Gastrocnemius medialis (tissue), 4 donors: ENCODE measurements at regions of chr13 and their contacts with region 1.

Region 1: GRCh38 chr13:20566898-20567874 is at the start of gene IFT88:
- DNase-seq: peak; percentile 72 to 81
- ATAC-seq: peak; percentile 89 to 92
- H3K4me3 ChIP-seq: peak within 1 kb of the TSS; percentile 82 to 91 (median 88)
- H3K27ac ChIP-seq: peak within 1 kb of the TSS; percentile 91 to 96 (median 96)
- H3K4me1 ChIP-seq: peaks cover 9% of the 10 kb centered on the region in 2 donors
- H3K27me3 ChIP-seq: no peaks in the 10 kb centered on the region
- CTCF ChIP-seq: peak in 2 of 5 experiments; percentile 26 to 33
- POLR2A ChIP-seq: peak; percentile 51 to 59
- total RNA-seq, gene IFT88: 3.5 to 9.4 (median 4.5) TPM

Region 2: DNA sequence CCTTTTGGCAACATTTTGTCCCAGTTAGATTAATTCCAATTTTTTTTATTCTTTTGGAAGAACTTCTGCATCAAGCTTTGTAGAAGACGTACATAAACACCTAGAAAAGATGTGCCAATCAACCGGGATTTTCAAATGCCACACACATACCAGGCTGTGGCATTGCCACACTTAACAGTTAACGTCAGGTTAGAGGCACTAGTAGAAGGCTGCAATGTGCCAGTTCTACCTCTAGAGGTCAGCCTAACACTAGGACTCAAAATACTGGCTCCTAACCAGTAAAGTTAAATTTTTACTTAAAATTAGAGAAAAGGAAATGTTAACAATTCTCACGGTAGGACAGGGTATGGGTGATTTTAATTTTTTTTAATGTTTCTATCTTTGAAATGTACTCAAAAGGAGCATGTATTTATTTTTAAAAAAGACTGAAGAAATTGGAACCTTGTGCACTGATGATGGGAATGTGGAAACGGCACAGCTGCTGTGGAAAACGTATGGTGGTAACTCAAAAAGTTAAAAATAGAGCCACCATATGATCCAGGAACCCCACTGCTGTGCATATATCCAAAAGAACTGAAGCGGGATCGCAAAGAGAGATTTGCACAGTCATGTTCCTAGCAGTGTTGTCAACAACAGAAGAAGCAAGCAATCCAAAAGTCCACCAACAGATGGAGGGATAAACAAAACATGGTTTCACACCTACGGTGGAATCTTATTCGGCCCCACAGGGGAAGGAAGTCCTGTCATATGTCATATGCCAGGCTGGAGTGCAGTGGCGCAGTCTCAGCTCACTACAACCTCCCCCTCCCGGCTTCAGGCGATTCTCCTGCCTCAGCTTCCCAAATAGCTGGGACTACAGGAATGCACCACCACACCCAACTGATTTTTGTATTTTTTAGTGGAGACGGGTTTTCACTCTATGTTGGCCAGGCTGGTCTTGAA is 71.8 kb before region 1 on chr13:
- in situ Hi-C with region 1: no loop called
- intact Hi-C with region 1: loop called (anchors 1 kb)
- DNase-seq: peak; percentile 31 to 42
- ATAC-seq: peak; percentile 85 to 87
- H3K4me3 ChIP-seq: peak overlapping the region in 3 of 4 donors; percentile 14 to 31 (median 16)
- H3K27ac ChIP-seq: peak overlapping the region in 3 of 4 donors; percentile 25 to 47 (median 27)
- H3K4me1 ChIP-seq: no peaks in the 10 kb centered on the region
- H3K27me3 ChIP-seq: no peaks in the 10 kb centered on the region
- CTCF ChIP-seq: peak; percentile 83 to 95 (median 92)
- POLR2A ChIP-seq: no peak

Region 3: DNA sequence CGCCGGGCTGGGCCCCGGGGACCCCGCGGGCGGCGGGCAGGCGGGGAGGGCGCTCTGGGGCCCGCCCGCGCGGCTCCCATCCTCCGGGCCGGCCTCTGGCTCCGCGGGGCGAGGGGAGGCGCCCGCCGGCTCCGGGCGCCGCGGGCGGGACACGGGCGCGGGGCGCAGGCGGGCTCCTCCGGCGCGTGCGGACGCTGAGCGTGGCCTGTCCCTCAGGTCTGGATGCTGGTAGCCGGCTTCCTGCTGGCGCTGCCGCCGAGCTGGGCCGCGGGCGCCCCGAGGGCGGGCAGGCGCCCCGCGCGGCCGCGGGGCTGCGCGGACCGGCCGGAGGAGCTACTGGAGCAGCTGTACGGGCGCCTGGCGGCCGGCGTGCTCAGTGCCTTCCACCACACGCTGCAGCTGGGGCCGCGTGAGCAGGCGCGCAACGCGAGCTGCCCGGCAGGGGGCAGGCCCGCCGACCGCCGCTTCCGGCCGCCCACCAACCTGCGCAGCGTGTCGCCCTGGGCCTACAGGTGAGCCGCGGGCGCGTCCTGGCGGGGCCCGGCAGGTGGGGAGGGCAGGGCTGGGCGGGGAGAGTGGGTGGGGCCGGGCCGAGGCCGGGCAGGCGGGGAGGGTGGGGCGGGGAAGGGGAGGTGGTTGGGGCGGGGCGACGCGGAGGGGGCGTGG is 136.7 kb after region 1 on chr13:
- in situ Hi-C with region 1: no loop called
- intact Hi-C with region 1: loop called (anchors 10 kb)
- DNase-seq: peak in 1 of 2 donors; percentile 65
- ATAC-seq: peak; percentile 64 to 79
- H3K4me3 ChIP-seq: peak overlapping the region in 3 of 4 donors; percentile 23 to 71 (median 54)
- H3K27ac ChIP-seq: peak overlapping the region; percentile 22 to 77 (median 58)
- H3K4me1 ChIP-seq: peaks cover 12 to 14% of the 10 kb centered on the region in 2 donors
- H3K27me3 ChIP-seq: no peaks in the 10 kb centered on the region
- CTCF ChIP-seq: peak in 4 of 5 experiments; percentile 63 to 81 (median 78)
- POLR2A ChIP-seq: peak; percentile 44 to 68

Region 4: DNA sequence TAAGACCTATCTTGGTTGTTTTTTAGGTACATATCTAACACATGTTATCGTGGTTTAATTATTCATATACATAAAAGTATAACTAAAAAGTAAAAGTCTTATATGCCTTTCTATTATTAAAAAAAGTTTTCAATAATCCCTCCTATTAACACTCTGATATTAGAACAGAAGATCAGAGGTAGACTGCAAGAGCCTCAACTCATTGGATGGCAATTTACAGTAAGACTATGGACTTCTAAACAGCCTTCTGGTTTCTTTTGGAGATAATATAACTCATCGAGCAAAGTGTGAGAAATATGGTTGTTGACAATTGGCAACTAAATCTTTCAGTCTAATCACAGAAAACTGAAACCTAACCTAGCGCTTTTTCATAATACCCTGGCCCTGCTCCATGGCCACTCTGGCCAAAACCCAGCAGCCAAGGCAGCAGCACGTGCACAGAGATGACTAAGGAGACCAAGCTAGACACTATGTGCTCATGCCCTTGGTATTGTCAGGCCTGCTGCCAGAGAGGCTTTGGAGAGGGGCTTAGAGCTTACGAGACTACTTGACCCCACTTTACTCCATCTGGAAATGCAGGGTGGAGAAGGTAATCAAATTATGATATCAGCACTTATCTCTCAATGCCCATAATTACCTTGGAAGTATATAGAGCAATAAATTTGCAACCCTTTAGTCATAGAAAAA is 247.2 kb after region 1 on chr13:
- in situ Hi-C with region 1: no loop called
- intact Hi-C with region 1: loop called (anchors 5 kb)
- DNase-seq: peak; percentile 85 to 95
- ATAC-seq: peak; percentile 94 to 96
- H3K4me3 ChIP-seq: peak overlapping the region in 3 of 4 donors; percentile 12 to 45 (median 29)
- H3K27ac ChIP-seq: peak overlapping the region; percentile 87 to 93 (median 88)
- H3K4me1 ChIP-seq: peaks cover 46 to 63% of the 10 kb centered on the region in 2 donors
- H3K27me3 ChIP-seq: no peaks in the 10 kb centered on the region
- CTCF ChIP-seq: no peak
- POLR2A ChIP-seq: no peak

Region 5: DNA sequence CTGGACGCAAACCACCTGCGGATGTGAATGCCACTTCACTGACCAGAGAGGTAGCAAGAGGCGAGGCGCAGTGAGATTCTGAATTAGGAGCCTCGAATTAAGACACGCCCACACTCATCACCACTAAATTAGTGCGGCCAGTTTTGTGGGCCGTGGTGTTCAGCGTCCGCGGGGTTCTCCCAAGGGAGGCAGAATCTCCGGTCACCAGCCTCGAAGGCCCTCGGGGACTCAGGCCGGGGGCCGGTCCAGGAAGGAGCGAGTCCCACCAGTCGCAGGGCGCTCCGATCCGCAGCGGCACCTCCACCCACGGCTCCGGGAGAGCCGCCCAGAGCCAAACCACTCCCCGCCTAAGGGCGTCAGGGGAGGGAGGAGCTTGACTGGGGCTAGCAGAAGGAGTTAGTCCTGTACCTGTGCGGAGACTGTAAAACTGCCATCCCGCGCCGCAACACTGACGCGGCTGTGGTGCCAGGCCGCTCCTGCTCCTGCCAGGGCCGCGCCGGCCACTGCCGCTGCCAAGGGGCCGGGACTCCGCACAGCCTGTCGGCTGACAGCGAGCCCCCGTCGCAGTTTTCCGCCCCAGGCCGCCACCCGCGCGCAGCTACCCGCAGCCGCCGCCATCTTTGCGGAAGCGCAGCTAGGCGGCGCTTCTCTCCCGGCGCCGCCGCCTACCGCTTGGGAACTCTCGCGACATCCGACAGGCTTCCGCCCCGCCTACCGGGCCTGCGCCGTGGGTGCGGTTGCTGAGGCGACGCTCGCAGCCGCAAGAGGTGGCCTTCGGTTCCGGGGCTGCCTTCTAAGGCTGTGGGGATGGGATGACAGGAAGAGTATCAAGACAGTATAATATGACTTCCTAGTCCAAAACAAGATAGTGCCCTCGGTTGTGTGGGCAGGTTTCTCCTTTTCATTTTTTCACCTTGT is 1036.6 kb after region 1 on chr13 and contains the start of gene MICU2:
- in situ Hi-C with region 1: no loop called
- intact Hi-C with region 1: loop called (anchors 10 kb)
- DNase-seq: peak; percentile 75 to 86
- ATAC-seq: peak; percentile 99
- H3K4me3 ChIP-seq: peak within 1 kb of the TSS; percentile 76 to 83 (median 78)
- H3K27ac ChIP-seq: peak within 1 kb of the TSS; percentile 79 to 95 (median 94)
- H3K4me1 ChIP-seq: peaks cover 7 to 8% of the 10 kb centered on the region in 2 donors
- H3K27me3 ChIP-seq: no peaks in the 10 kb centered on the region
- CTCF ChIP-seq: peak in 4 of 5 experiments; percentile 16 to 44 (median 35)
- POLR2A ChIP-seq: peak; percentile 87 to 88
- total RNA-seq, gene MICU2: 83.6 to 126 (median 106) TPM